Aorta (tissue), 5 donors: ENCODE measurements at regions of chr16 and their contacts with region 1.

Region 1: GRCh38 chr16:30997000-30997886 is 12.2 kb downstream of the HSD3B7 start:
- DNase-seq: peak; percentile 89 to 96
- ATAC-seq: peak; percentile 93
- H3K4me3 ChIP-seq: peak overlapping the region; percentile 29 to 47
- H3K27ac ChIP-seq: peak overlapping the region; percentile 30 to 69
- H3K4me1 ChIP-seq: no peaks in the 10 kb centered on the region
- H3K27me3 ChIP-seq: no peaks in the 10 kb centered on the region

Region 2: GRCh38 chr16:30669896-30670797 is 327.1 kb before region 1 on chr16:
- intact Hi-C with region 1: no loop called
- DNase-seq: no peak
- ATAC-seq: no peak
- H3K4me3 ChIP-seq: no peak overlapping the region
- H3K27ac ChIP-seq: no peak overlapping the region
- H3K4me1 ChIP-seq: no peaks in the 10 kb centered on the region
- H3K27me3 ChIP-seq: no peaks in the 10 kb centered on the region

Region 3: DNA sequence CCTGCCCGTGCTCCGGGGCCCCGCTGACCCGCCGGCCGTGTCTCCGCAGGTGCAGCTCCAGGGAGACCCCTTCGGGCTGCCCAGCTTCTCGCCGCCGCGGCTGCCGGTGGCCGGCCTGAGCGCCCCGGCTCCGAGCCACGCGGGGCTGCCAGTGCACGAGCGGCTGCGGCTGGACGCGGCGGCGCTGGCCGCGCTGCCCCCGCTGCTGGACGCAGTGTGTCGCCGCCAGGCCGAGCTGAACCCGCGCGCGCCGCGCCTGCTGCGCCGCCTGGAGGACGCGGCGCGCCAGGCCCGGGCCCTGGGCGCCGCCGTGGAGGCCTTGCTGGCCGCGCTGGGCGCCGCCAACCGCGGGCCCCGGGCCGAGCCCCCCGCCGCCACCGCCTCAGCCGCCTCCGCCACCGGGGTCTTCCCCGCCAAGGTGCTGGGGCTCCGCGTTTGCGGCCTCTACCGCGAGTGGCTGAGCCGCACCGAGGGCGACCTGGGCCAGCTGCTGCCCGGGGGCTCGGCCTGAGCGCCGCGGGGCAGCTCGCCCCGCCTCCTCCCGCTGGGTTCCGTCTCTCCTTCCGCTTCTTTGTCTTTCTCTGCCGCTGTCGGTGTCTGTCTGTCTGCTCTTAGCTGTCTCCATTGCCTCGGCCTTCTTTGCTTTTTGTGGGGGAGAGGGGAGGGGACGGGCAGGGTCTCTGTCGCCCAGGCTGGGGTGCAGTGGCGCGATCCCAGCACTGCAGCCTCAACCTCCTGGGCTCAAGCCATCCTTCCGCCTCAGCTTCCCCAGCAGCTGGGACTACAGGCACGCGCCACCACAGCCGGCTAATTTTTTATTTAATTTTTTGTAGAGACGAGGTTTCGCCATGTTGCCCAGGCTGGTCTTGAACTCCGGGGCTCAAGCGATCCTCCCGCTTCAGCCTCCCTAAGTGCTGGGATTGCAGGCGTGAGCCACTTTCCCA is 94.9 kb before region 1 on chr16:
- intact Hi-C with region 1: no loop called
- DNase-seq: peak; percentile 79 to 91
- ATAC-seq: peak; percentile 82
- H3K4me3 ChIP-seq: peak overlapping the region; percentile 50 to 80
- H3K27ac ChIP-seq: peak overlapping the region; percentile 77 to 78
- H3K4me1 ChIP-seq: no peaks in the 10 kb centered on the region
- H3K27me3 ChIP-seq: no peaks in the 10 kb centered on the region

Region 4: GRCh38 chr16:30957456-30958174 is 39.6 kb before region 1 on chr16 and contains the start of gene SETD1A:
- intact Hi-C with region 1: no loop called
- DNase-seq: peak; percentile 98 to 99
- ATAC-seq: peak; percentile 97
- H3K4me3 ChIP-seq: peak within 1 kb of the TSS; percentile 68 to 97
- H3K27ac ChIP-seq: peak within 1 kb of the TSS; percentile 46 to 92
- H3K4me1 ChIP-seq: no peaks in the 10 kb centered on the region
- H3K27me3 ChIP-seq: no peaks in the 10 kb centered on the region
- total RNA-seq, gene SETD1A: 16.4 to 19.7 TPM

Region 5: DNA sequence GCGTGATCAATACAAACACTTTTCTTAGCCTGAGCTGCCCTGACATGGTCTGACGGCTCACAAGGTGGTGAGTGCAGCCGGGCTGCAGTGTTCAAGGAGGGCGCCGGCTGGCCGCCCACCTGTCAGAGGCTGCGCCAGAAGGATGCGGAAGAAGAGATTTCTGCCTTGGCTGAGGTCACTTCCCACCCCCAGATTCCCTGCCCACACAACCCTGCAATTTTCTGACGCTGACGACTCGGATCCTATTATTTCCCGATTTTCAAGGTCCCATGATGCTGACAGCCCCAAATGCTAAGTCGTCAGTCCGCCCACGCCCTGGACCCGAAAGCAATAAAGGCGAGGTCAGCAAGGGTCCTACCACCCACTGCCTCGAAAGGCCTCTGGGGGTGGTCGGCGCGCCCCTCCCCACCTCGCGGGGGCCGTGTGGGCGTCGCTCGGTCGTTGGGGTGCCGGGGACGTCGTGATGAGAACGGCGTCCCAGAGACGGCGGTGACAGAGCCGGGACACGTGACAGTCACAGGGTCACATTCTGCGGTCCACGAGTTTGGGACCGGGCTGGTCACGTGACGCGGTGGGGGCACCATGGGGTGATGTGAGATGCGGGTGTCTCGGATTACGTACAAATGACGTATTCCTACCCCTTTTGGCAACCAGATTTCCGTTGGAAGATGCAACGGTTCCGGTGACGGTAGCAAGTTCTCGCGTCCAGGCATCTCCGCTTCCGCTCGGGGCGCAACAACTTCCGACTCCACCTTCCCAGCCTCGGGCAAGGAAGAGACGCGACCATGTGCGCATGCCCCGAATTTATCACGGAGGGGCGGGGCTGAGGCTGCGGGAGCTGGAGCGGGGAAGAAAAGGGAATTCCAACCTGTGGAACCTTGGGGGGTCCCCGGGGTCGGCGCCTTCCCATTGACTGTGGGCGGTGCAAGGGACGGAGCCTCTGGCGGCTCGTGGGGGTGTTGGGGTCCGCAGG is 35.8 kb after region 1 on chr16 and contains the start of gene STX4:
- intact Hi-C with region 1: loop called in 1 of 2 experiments (anchors 2 kb)
- DNase-seq: peak; percentile 99 to 100
- ATAC-seq: peak; percentile 96
- H3K4me3 ChIP-seq: peak within 1 kb of the TSS; percentile 76 to 89
- H3K27ac ChIP-seq: peak within 1 kb of the TSS; percentile 6 to 83
- H3K4me1 ChIP-seq: peaks cover 0 to 1% of the 10 kb centered on the region in 2 donors
- H3K27me3 ChIP-seq: no peaks in the 10 kb centered on the region
- total RNA-seq, gene STX4: 73.5 to 88.6 TPM